Dorsolateral prefrontal cortex (tissue), 120 donors: ENCODE measurements at regions of chr2 and their contacts with region 1.

Region 1: DNA sequence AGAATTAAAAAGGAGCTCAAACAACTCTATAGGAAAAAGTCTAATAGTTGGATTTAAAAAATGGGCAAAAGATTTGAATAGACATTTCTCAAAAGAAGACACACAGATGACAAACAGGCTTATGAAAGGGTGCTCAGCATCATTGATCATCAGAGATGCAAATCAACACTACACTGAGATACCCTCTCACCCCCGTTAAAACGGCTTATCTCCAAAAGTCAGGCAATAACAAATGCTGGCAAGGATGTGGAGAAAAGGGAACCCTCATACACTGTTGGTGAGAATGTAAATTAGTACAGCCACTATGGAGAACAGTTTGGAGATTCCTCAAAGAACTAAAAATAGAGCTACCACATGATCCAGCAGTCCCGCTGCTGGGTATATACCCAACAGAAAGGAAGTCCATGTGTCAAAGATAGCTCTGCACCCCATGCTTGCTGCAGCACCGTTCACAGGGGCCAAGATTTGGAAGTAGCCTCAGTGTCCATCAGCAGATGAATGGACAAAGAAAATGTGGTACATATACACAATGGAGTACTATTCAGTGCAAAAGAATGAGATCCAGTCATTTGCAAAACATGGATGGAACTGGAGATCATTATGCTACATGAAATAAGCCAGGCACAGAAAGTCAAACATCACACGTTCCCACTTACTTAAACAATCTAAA is 46.7 kb upstream of the B3GNT7 start:
- DNase-seq: peak in 3 of 10 donors; percentile 44 to 72 (median 54)
- H3K4me3 ChIP-seq: peak overlapping the region in 1 of 59 donors; percentile 32
- H3K27ac ChIP-seq: peak overlapping the region in 56 of 59 donors; percentile 27 to 92 (median 78)
- H3K27me3 ChIP-seq: no peaks in the 10 kb centered on the region
- CTCF ChIP-seq: peak in 4 of 56 donors; percentile 10 to 12 (median 11)

Region 2: GRCh38 chr2:231387904-231388724 is 39.3 kb after region 1 on chr2:
- intact Hi-C with region 1: loop called (anchors 1 kb)
- DNase-seq: peak; percentile 37 to 97 (median 94)
- H3K4me3 ChIP-seq: peak overlapping the region in 2 of 59 donors; percentile 6 to 18
- H3K27ac ChIP-seq: peak overlapping the region; percentile 58 to 98 (median 91)
- H3K27me3 ChIP-seq: peaks cover 0 to 4% (median 0%) of the 10 kb centered on the region in 45 donors
- CTCF ChIP-seq: peak in 37 of 56 donors; percentile 9 to 57 (median 35)